ENCODE measurements at regions of chr17 and their contacts with region 1.

Region 1: GRCh38 chr17:42577532-42578281 is at the start of gene PSMC3IP:
- DNase-seq: peak; percentile 91
- ATAC-seq: peak; percentile 85
- H3K4me3 ChIP-seq: peak within 1 kb of the TSS; percentile 100
- H3K27ac ChIP-seq: peak within 1 kb of the TSS; percentile 70
- H3K4me1 ChIP-seq: peaks cover 13% of the 10 kb centered on the region; the same call in 1 of the 2 replicates
- H3K27me3 ChIP-seq: no peaks in the 10 kb centered on the region
- CTCF ChIP-seq: peak; percentile 45; the same call in 1 of the 2 replicates
- total RNA-seq, gene PSMC3IP: 20.3 and 24.1 TPM in 2 replicates

Region 2: GRCh38 chr17:42609182-42609813 is 31.6 kb after region 1 on chr17 and contains the starts of genes RETREG3 and TUBG1:
- CTCF ChIA-PET with region 1: interaction called, 15 read pairs
- POLR2A ChIA-PET with region 1: no interaction called
- intact Hi-C with region 1: no loop called
- DNase-seq: peak; percentile 97
- ATAC-seq: peak; percentile 88
- H3K4me3 ChIP-seq: peak within 1 kb of the TSS; percentile 98
- H3K27ac ChIP-seq: peak within 1 kb of the TSS; percentile 50
- H3K4me1 ChIP-seq: peaks cover 4% of the 10 kb centered on the region; the same call in 1 of the 2 replicates
- H3K27me3 ChIP-seq: no peaks in the 10 kb centered on the region
- CTCF ChIP-seq: no peak; the same call in 1 of the 2 replicates
- total RNA-seq, gene RETREG3: 19.3 and 21.9 TPM in 2 replicates
- total RNA-seq, gene TUBG1: 97.2 and 114 TPM in 2 replicates

Region 3: GRCh38 chr17:42698736-42699414 is 121.2 kb after region 1 on chr17:
- CTCF ChIA-PET with region 1: interaction called, 16 read pairs
- POLR2A ChIA-PET with region 1: no interaction called
- intact Hi-C with region 1: no loop called
- DNase-seq: peak; percentile 52
- ATAC-seq: peak; percentile 67; the same call in 1 of the 2 replicates
- H3K4me3 ChIP-seq: no peak overlapping the region
- H3K27ac ChIP-seq: no peak overlapping the region
- H3K4me1 ChIP-seq: peaks cover 4% of the 10 kb centered on the region; the same call in 1 of the 2 replicates
- H3K27me3 ChIP-seq: no peaks in the 10 kb centered on the region
- CTCF ChIP-seq: no peak